ENCODE measurements at regions of chr2 and their contacts with region 1.

Region 1: DNA sequence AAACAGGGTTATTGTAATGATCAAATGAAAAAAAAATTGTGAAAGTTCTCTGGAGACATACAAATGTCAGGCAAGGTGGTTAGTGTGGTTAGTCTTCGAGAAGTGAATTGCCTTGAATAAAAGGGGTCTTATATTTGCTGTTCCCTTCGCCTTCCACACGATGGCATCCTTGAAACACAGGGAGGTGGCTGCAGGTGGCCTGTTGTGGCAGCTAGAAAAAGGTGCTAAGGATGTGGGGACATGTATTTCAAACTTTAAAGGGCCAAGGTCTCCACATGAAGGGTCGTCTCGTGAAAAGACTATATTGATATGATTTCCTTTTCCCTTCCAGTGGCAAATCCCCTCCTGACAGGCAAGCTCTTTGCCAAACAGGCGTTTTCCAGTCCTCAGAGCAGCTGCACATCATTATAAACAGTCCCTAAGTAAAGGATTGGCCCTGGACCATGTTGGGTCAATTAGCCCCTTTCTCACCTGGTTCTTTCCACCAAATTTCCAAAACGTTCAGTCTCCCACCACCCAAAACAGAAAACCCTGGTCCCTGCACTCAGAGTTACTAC is 68.5 kb downstream of the COPS8 start:
- DNase-seq: peak; percentile 11 to 50 (median 30)
- ATAC-seq: no peak; the same call in 2 of the 3 replicates
- H3K4me3 ChIP-seq: no peak overlapping the region
- H3K27ac ChIP-seq: no peak overlapping the region
- H3K4me1 ChIP-seq: no peaks in the 10 kb centered on the region
- H3K27me3 ChIP-seq: peaks cover 2 to 27% of the 10 kb centered on the region in 2 experiments; a peak in 2 of 5 replicates
- CTCF ChIP-seq: peak; percentile 62 to 80 (median 66)
- EP300 ChIP-seq: no peak
- POLR2A ChIP-seq: no peak
- RAD21 ChIP-seq: peak; percentile 57 to 82

Region 2: DNA sequence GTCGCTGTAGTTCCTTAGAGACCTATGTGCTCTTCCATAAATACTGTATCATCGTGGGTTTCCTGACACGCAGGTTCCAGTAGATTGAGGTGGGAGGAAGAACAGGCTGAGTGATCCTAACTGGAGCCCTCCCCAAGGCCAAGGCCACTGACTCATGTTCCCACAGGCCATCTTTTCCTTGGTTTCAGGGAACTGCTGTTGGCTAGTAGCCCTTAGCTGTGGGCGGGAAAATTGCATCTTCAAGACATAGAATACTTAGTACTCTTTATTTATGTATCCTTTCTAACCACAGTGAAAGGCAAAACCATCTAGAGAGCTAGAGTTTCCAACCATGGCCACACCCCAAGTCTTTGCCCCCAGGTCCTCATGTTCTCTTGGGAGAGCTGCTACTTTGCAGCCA is 12.6 kb before region 1 on chr2:
- CTCF ChIA-PET with region 1: no interaction called
- POLR2A ChIA-PET with region 1: no interaction called
- in situ Hi-C with region 1: no loop called
- intact Hi-C with region 1: no loop called
- DNase-seq: no peak
- ATAC-seq: no peak
- H3K4me3 ChIP-seq: no peak overlapping the region
- H3K27ac ChIP-seq: no peak overlapping the region
- H3K4me1 ChIP-seq: no peaks in the 10 kb centered on the region
- H3K27me3 ChIP-seq: no peaks in the 10 kb centered on the region
- CTCF ChIP-seq: no peak
- EP300 ChIP-seq: no peak
- POLR2A ChIP-seq: no peak
- RAD21 ChIP-seq: no peak

Region 3: DNA sequence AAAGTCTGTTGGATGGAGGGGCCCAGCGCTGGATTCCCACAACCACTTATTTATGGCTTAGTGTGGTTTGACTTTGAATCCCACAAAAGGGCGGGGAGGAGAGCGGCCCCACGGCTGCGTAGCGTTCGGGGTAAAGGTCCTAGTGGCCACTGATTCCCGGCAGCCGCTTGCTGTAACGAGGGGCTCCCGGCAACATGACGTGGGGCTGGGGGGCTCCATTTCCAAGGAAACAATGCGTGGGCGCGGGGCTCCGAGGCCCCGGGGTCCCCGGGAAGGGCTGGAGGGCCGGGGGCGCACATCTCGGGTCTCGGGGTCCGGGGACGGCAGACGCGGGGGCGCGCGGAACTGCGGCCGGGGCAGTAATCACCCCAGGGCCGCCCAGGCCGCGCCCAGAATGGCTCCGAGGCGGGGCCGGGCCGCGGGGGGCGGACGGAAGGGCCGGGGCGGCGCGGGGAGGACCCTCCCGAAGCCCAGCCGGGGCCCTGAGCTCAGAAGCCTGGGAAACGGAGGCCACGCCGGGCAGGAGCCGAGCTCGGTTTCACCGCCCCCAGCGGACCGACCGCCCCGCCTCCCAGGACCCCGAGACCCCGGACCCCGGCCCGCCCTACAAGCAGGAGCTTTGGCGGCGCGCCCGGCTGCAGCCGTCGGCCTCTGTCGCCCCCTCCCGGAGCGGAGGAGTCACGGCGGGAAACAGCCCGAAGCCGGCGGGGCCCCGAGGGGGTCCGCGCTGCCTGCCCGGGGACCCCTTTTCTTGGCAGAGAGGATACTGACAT is 321.0 kb after region 1 on chr2:
- CTCF ChIA-PET with region 1: no interaction called
- POLR2A ChIA-PET with region 1: no interaction called
- in situ Hi-C with region 1: no loop called
- intact Hi-C with region 1: loop called (anchors 2 kb)
- DNase-seq: peak; percentile 70 to 91 (median 86)
- ATAC-seq: peak; percentile 97
- H3K4me3 ChIP-seq: peak overlapping the region; percentile 64
- H3K27ac ChIP-seq: peak overlapping the region; percentile 62; the same call in 2 of the 3 replicates
- H3K4me1 ChIP-seq: peaks cover 0 to 17% of the 10 kb centered on the region in 2 experiments; a peak in 4 of 5 replicates
- H3K27me3 ChIP-seq: peaks cover 0 to 16% of the 10 kb centered on the region in 2 experiments; a peak in 3 of 5 replicates
- CTCF ChIP-seq: peak; percentile 57 to 68 (median 61)
- EP300 ChIP-seq: no peak
- POLR2A ChIP-seq: no peak; the same call in 1 of the 2 replicates
- RAD21 ChIP-seq: peak; percentile 59 to 61

Region 4: GRCh38 chr2:237512774-237513466 is 358.8 kb after region 1 on chr2:
- CTCF ChIA-PET with region 1: no interaction called
- POLR2A ChIA-PET with region 1: no interaction called
- in situ Hi-C with region 1: no loop called
- intact Hi-C with region 1: loop called (anchors 2 kb)
- DNase-seq: peak; percentile 78 to 85 (median 82)
- ATAC-seq: peak; percentile 97
- H3K4me3 ChIP-seq: no peak overlapping the region
- H3K27ac ChIP-seq: no peak overlapping the region
- H3K4me1 ChIP-seq: no peaks in the 10 kb centered on the region
- H3K27me3 ChIP-seq: peaks cover 3 to 31% of the 10 kb centered on the region in 2 experiments; a peak in 3 of 5 replicates
- CTCF ChIP-seq: peak; percentile 83 to 99 (median 98)
- EP300 ChIP-seq: no peak
- POLR2A ChIP-seq: no peak
- RAD21 ChIP-seq: peak; percentile 84 to 92

Region 5: GRCh38 chr2:237572021-237572741 is 418.0 kb after region 1 on chr2:
- CTCF ChIA-PET with region 1: interaction called, 6 read pairs
- POLR2A ChIA-PET with region 1: no interaction called
- in situ Hi-C with region 1: loop called (anchors 10 kb)
- intact Hi-C with region 1: loop called (anchors 1 kb)
- DNase-seq: peak; percentile 79 to 86 (median 84)
- ATAC-seq: peak; percentile 100
- H3K4me3 ChIP-seq: no peak overlapping the region
- H3K27ac ChIP-seq: no peak overlapping the region
- H3K4me1 ChIP-seq: peaks cover 0 to 3% of the 10 kb centered on the region in 2 experiments; a peak in 1 of 5 replicates
- H3K27me3 ChIP-seq: peaks cover 0 to 42% of the 10 kb centered on the region in 2 experiments; a peak in 3 of 5 replicates
- CTCF ChIP-seq: peak; percentile 84 to 98 (median 92)
- EP300 ChIP-seq: no peak
- POLR2A ChIP-seq: no peak
- RAD21 ChIP-seq: peak; percentile 97

Measured in K562 (cell line).